Activated B cell treated with CpG ODN at 0.5 μM for 24 hours (primary cell): ENCODE measurements at regions of chr5 and their contacts with region 1.

Region 1: GRCh38 chr5:143008809-143009521 is 238.8 kb downstream of the ARHGAP26 start:
- DNase-seq: no peak
- ATAC-seq: peak; percentile 69
- H3K4me3 Mint-ChIP-seq: peak overlapping the region; percentile 30
- H3K27ac Mint-ChIP-seq: peak overlapping the region; percentile 80
- H3K4me1 Mint-ChIP-seq: peaks cover 55% of the 10 kb centered on the region
- H3K27me3 Mint-ChIP-seq: no peaks in the 10 kb centered on the region
- CTCF ChIP-seq: no peak

Region 2: DNA sequence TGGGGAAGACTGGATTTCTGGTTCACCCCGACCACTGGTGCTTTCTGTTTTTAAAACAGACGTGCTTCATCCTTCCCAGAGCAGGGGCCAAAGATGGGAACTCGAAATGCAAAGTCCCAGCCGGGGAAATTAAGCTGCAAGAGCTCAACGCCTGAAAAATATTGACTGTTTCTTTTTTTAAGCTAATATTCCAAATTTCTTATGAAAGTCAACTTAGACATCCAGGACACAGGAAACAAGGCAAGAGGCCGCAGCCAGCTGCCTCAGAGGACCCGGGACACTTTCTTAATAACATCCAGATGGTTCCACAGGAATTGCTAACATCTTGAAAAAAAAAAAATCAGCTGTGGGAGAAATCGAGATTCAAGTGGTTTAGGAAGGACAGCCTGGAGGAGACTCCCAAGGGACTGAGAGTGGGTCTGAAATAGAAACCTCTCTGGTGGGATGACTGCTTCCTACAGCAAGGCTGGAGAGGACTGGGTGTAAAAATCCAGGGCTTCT is 468.0 kb before region 1 on chr5:
- CTCF ChIA-PET with region 1: no interaction called
- POLR2A ChIA-PET with region 1: no interaction called
- intact Hi-C with region 1: no loop called
- DNase-seq: no peak
- ATAC-seq: no peak
- H3K4me3 Mint-ChIP-seq: no peak overlapping the region
- H3K27ac Mint-ChIP-seq: no peak overlapping the region
- H3K4me1 Mint-ChIP-seq: no peaks in the 10 kb centered on the region
- H3K27me3 Mint-ChIP-seq: peaks cover 18% of the 10 kb centered on the region
- CTCF ChIP-seq: no peak

Region 3: GRCh38 chr5:142931896-142932686 is 76.9 kb before region 1 on chr5:
- CTCF ChIA-PET with region 1: no interaction called
- POLR2A ChIA-PET with region 1: no interaction called
- intact Hi-C with region 1: no loop called
- DNase-seq: no peak
- ATAC-seq: no peak
- H3K4me3 Mint-ChIP-seq: no peak overlapping the region
- H3K27ac Mint-ChIP-seq: no peak overlapping the region
- H3K4me1 Mint-ChIP-seq: peaks cover 14% of the 10 kb centered on the region
- H3K27me3 Mint-ChIP-seq: no peaks in the 10 kb centered on the region
- CTCF ChIP-seq: no peak

Region 4: DNA sequence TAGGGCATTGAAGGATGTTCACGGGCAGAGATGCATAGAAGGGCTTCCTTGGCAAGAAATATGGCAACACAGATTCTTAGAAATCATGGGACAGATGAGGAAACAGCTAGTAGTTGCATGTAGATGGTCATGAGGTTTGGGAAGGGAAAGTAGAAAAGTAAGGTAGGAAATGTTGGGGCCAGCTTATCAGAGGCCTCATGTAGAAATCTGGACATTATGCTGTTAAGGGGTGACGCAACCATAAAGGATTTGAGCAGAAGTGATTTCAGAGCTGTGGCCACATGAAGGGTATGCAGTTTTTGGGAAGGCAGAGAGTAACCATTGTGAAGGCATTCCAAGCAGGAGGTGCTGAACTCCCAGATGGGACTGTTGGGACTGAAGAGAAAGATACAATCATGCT is 14.7 kb before region 1 on chr5:
- CTCF ChIA-PET with region 1: no interaction called
- POLR2A ChIA-PET with region 1: no interaction called
- intact Hi-C with region 1: no loop called
- DNase-seq: no peak
- ATAC-seq: no peak
- H3K4me3 Mint-ChIP-seq: no peak overlapping the region
- H3K27ac Mint-ChIP-seq: no peak overlapping the region
- H3K4me1 Mint-ChIP-seq: peaks cover 22% of the 10 kb centered on the region
- H3K27me3 Mint-ChIP-seq: no peaks in the 10 kb centered on the region
- CTCF ChIP-seq: no peak

Region 5: GRCh38 chr5:143030349-143030748 is 21.4 kb after region 1 on chr5:
- CTCF ChIA-PET with region 1: no interaction called
- POLR2A ChIA-PET with region 1: interaction called, 3 read pairs
- intact Hi-C with region 1: loop called (anchors 2 kb)
- DNase-seq: no peak
- ATAC-seq: peak; percentile 61
- H3K4me3 Mint-ChIP-seq: peak overlapping the region; percentile 47
- H3K27ac Mint-ChIP-seq: peak overlapping the region; percentile 9
- H3K4me1 Mint-ChIP-seq: peaks cover 27% of the 10 kb centered on the region
- H3K27me3 Mint-ChIP-seq: no peaks in the 10 kb centered on the region
- CTCF ChIP-seq: no peak